ENCODE measurements at regions of chr3 and their contacts with region 1.

Region 1: GRCh38 chr3:72682936-72683452 is 165.3 kb downstream of the SHQ1 start:
- DNase-seq: peak; percentile 48
- H3K4me3 Mint-ChIP-seq: no peak overlapping the region
- H3K27ac Mint-ChIP-seq: no peak overlapping the region
- H3K4me1 Mint-ChIP-seq: peaks cover 13% of the 10 kb centered on the region
- H3K27me3 Mint-ChIP-seq: no peaks in the 10 kb centered on the region

Region 2: DNA sequence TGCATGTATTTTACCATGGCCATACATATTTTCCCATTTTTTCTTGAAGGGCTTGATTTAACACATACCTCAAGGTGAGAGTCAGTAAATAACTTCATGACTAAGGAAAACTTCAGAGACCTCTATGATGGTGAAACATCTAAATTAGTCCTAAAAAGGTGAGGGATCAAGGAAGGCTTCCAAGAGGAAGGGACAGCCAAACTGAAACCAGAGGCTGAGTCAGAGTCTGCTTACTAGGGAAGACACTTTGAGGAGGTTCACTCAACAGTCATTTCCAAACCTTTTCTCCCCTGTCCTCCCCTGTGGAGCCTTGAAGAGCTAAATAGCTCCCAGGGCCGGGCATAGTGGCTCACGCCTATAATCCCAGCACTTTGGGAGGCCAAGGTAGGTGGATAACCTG is 41.3 kb before region 1 on chr3:
- CTCF ChIA-PET with region 1: no interaction called
- intact Hi-C with region 1: loop called (anchors 1 kb)
- DNase-seq: no peak
- H3K4me3 Mint-ChIP-seq: no peak overlapping the region
- H3K27ac Mint-ChIP-seq: no peak overlapping the region
- H3K4me1 Mint-ChIP-seq: peaks cover 5% of the 10 kb centered on the region
- H3K27me3 Mint-ChIP-seq: peaks cover 12% of the 10 kb centered on the region

Region 3: DNA sequence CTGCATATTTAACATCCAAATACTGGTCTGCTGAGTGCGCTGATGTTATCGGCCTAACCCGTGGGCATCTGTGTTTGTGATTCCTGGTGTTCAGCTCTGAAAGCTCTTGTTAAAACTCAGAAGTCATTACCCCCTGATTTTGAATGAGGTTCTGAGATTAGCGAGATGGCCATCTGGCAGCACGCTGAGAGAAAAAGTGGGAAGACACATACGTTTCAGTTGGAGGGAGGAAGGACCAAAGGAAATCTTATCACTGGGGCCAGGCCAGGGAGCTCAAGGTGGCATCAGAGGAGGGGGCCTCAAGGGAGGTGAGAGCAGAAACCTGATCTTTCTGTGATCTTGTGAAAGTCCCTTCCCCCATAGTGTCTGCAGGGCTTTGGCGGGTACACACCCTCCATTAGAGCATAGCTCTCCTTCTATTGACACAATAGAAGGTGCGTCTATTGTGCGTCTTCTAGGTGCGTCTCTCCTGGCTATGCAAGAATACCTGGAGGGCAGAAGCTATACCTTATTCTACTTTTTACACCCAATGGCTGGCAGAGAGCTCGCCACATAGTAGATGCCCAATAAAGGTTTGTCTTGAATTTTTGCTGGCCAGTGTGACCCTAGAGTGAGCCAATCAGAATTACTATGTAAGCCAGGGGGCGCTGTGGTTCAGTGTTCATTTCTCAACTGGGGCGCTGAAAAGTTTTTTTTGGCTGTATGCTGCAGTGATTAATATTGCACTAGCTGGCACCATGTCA is 17.1 kb before region 1 on chr3:
- CTCF ChIA-PET with region 1: interaction called, 11 read pairs
- intact Hi-C with region 1: no loop called
- DNase-seq: peak; percentile 81
- H3K4me3 Mint-ChIP-seq: no peak overlapping the region
- H3K27ac Mint-ChIP-seq: no peak overlapping the region
- H3K4me1 Mint-ChIP-seq: no peaks in the 10 kb centered on the region
- H3K27me3 Mint-ChIP-seq: no peaks in the 10 kb centered on the region